ENCODE measurements at regions of chr6 and their contacts with region 1.

Region 1: GRCh38 chr6:111483736-111484632 is 966 bp upstream of the REV3L start:
- DNase-seq: peak in 6 of 9 donors; percentile 80 to 89 (median 86)
- ATAC-seq: peak; percentile 79
- H3K4me3 ChIP-seq: peak overlapping the region; percentile 93
- H3K4me3 Mint-ChIP-seq: peak overlapping the region; percentile 96 to 100 (median 98)
- H3K27ac ChIP-seq: peak overlapping the region; percentile 99
- H3K27ac Mint-ChIP-seq: peak overlapping the region; percentile 95 to 99 (median 99)
- H3K4me1 ChIP-seq: peaks cover 14 to 29% of the 10 kb centered on the region in 2 donors
- H3K4me1 Mint-ChIP-seq: peaks cover 28 to 59% (median 52%) of the 10 kb centered on the region in 7 donors
- H3K27me3 ChIP-seq: no peaks in the 10 kb centered on the region
- H3K27me3 Mint-ChIP-seq: peaks cover 0 to 3% (median 0%) of the 10 kb centered on the region in 5 donors

Region 2: GRCh38 chr6:109482905-109483735 is 2000.9 kb before region 1 on chr6 and contains the start of gene ZBTB24:
- CTCF ChIA-PET with region 1: no interaction called
- POLR2A ChIA-PET with region 1: no interaction called
- intact Hi-C with region 1: loop called in 1 of 2 experiments (anchors 10 kb)
- DNase-seq: peak; percentile 86 to 92 (median 89)
- ATAC-seq: peak; percentile 94
- H3K4me3 ChIP-seq: peak within 1 kb of the TSS; percentile 79
- H3K4me3 Mint-ChIP-seq: peak within 1 kb of the TSS; percentile 92 to 99 (median 97)
- H3K27ac ChIP-seq: peak within 1 kb of the TSS; percentile 84
- H3K27ac Mint-ChIP-seq: peak within 1 kb of the TSS; percentile 42 to 95 (median 91)
- H3K4me1 ChIP-seq: peaks cover 38 to 39% of the 10 kb centered on the region in 2 donors
- H3K4me1 Mint-ChIP-seq: peaks cover 38 to 55% (median 51%) of the 10 kb centered on the region in 7 donors
- H3K27me3 ChIP-seq: no peaks in the 10 kb centered on the region
- H3K27me3 Mint-ChIP-seq: peaks cover 0 to 7% (median 0%) of the 10 kb centered on the region in 5 donors
- total RNA-seq, gene ZBTB24: 10.2 to 26.6 (median 23.4) TPM

Region 3: GRCh38 chr6:110981202-110981600 is 502.8 kb before region 1 on chr6:
- CTCF ChIA-PET with region 1: no interaction called
- POLR2A ChIA-PET with region 1: interaction called, 4 read pairs
- intact Hi-C with region 1: loop called in 1 of 2 experiments (anchors 1 kb)
- DNase-seq: peak in 1 of 9 donors; percentile 28
- ATAC-seq: no peak
- H3K4me3 ChIP-seq: peak overlapping the region; percentile 81
- H3K4me3 Mint-ChIP-seq: peak overlapping the region; percentile 95 to 99 (median 98)
- H3K27ac ChIP-seq: peak overlapping the region; percentile 92
- H3K27ac Mint-ChIP-seq: peak overlapping the region; percentile 96 to 100 (median 99)
- H3K4me1 ChIP-seq: peaks cover 0 to 11% of the 10 kb centered on the region in 2 donors
- H3K4me1 Mint-ChIP-seq: peaks cover 19 to 46% (median 35%) of the 10 kb centered on the region in 7 donors
- H3K27me3 ChIP-seq: no peaks in the 10 kb centered on the region
- H3K27me3 Mint-ChIP-seq: no peaks in the 10 kb centered on the region

Region 4: DNA sequence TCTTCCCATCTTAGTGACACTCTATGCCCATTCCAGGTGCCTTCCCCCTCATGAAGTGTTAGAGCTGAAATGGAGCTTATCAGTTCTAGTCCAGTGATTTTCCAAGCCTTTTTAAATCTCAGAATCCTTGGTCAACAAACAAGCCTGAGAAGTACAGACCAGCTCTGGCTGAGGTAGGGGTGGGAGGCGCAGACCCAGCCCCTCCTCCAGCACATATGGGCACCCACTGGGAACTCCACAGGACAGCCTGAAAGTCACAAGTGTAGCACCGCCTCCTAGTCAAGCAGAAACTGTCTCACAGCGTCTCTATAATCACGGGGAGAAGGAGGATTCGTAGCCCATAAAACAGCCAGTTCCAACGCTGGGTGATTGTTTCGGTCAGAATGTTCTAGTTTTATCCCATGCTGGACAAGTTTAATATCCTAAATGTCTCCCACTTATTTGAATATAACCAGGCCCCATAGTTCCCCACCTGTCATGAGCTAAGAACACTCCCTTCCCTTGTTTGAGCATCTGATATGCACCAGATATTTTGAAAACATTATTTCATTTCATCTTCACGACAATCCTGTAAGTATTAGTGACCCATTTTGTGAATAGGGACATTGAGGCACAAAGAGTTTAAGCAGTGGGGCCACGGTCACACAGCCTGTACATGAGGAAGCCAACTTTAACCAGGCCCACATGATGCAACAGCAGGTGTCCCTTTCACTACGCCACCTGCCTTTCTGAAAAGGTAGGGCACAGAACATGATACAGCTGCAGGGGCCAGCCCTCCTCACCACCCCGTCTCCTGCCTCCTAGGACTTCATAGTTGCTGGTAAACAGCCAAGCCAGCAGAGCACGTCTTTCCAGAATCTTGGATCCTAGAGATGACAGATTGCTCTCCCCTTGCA is 81.6 kb after region 1 on chr6:
- CTCF ChIA-PET with region 1: no interaction called
- POLR2A ChIA-PET with region 1: no interaction called
- intact Hi-C with region 1: loop called (anchors 1 to 2 kb)
- DNase-seq: peak in 2 of 9 donors; percentile 16 to 21
- ATAC-seq: peak; percentile 60
- H3K4me3 ChIP-seq: no peak overlapping the region
- H3K4me3 Mint-ChIP-seq: peak overlapping the region in 3 of 10 donors; percentile 3 to 15 (median 3)
- H3K27ac ChIP-seq: no peak overlapping the region
- H3K27ac Mint-ChIP-seq: peak overlapping the region; percentile 44 to 95 (median 85)
- H3K4me1 ChIP-seq: peaks cover 0 to 19% of the 10 kb centered on the region in 2 donors
- H3K4me1 Mint-ChIP-seq: peaks cover 19 to 61% (median 50%) of the 10 kb centered on the region in 7 donors
- H3K27me3 ChIP-seq: no peaks in the 10 kb centered on the region
- H3K27me3 Mint-ChIP-seq: no peaks in the 10 kb centered on the region

Region 5: DNA sequence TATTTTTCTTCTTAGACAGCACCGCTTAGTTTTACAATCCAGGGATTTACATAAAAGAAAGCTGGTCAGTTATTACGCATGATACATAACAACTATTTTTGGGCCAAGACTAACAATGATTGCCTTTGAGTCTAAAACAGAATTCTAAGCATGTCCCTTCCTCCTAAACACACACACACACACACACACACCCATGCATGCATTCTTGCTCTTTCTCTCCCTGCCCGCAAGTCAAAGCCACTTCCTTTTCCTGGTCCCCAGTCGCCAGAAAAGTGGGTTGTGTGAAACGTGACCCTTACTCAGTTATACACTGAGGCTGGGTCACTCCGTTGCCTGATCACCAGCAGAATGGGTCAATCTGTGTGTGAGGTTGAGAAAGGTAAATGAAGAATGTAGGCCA is 357.8 kb after region 1 on chr6:
- CTCF ChIA-PET with region 1: no interaction called
- POLR2A ChIA-PET with region 1: no interaction called
- intact Hi-C with region 1: loop called in 1 of 2 experiments (anchors 10 kb)
- DNase-seq: peak in 7 of 9 donors; percentile 38 to 63 (median 61)
- ATAC-seq: no peak
- H3K4me3 ChIP-seq: no peak overlapping the region
- H3K4me3 Mint-ChIP-seq: no peak overlapping the region
- H3K27ac ChIP-seq: peak overlapping the region; percentile 62
- H3K27ac Mint-ChIP-seq: no peak overlapping the region
- H3K4me1 ChIP-seq: peaks cover 98 to 100% of the 10 kb centered on the region in 2 donors
- H3K4me1 Mint-ChIP-seq: peaks cover 0 to 55% (median 0%) of the 10 kb centered on the region in 7 donors
- H3K27me3 ChIP-seq: no peaks in the 10 kb centered on the region
- H3K27me3 Mint-ChIP-seq: no peaks in the 10 kb centered on the region

Region 6: GRCh38 chr6:112087136-112087911 is 603.3 kb after region 1 on chr6 and contains the starts of genes FAM229B and TUBE1:
- CTCF ChIA-PET with region 1: no interaction called
- POLR2A ChIA-PET with region 1: interaction called, 3 read pairs
- intact Hi-C with region 1: loop called (anchors 1 to 2 kb)
- DNase-seq: peak; percentile 70 to 96 (median 90)
- ATAC-seq: peak; percentile 98
- H3K4me3 ChIP-seq: peak within 1 kb of the TSS; percentile 64
- H3K4me3 Mint-ChIP-seq: no peak within 1 kb of the TSS
- H3K27ac ChIP-seq: peak within 1 kb of the TSS; percentile 87
- H3K27ac Mint-ChIP-seq: peak within 1 kb of the TSS in 1 of 9 donors; percentile 65
- H3K4me1 ChIP-seq: peaks cover 0 to 7% of the 10 kb centered on the region in 2 donors
- H3K4me1 Mint-ChIP-seq: peaks cover 0 to 18% (median 10%) of the 10 kb centered on the region in 7 donors
- H3K27me3 ChIP-seq: peaks cover 0 to 3% of the 10 kb centered on the region in 2 donors
- H3K27me3 Mint-ChIP-seq: peaks cover 0 to 37% (median 6%) of the 10 kb centered on the region in 5 donors
- total RNA-seq, gene FAM229B: 0.70 to 5.8 (median 2.0) TPM
- total RNA-seq, gene TUBE1: 19.3 to 50.0 (median 35.1) TPM